Dorsolateral prefrontal cortex (tissue), 120 donors: ENCODE measurements at regions of chr14 and their contacts with region 1.

Region 1: GRCh38 chr14:33357225-33358010 is 418.7 kb downstream of the NPAS3 start:
- DNase-seq: peak in 8 of 10 donors; percentile 33 to 69 (median 52)
- H3K4me3 ChIP-seq: no peak overlapping the region
- H3K27ac ChIP-seq: peak overlapping the region in 12 of 59 donors; percentile 2 to 65 (median 22)
- H3K27me3 ChIP-seq: no peaks in the 10 kb centered on the region
- CTCF ChIP-seq: peak in 9 of 56 donors; percentile 9 to 40 (median 19)

Region 2: GRCh38 chr14:33229269-33229929 is 128.0 kb before region 1 on chr14:
- intact Hi-C with region 1: loop called in 1 of 2 experiments (anchors 10 kb)
- DNase-seq: peak in 9 of 10 donors; percentile 3 to 70 (median 44)
- H3K4me3 ChIP-seq: peak overlapping the region in 47 of 59 donors; percentile 1 to 55 (median 26)
- H3K27ac ChIP-seq: peak overlapping the region in 41 of 59 donors; percentile 1 to 78 (median 40)
- H3K27me3 ChIP-seq: no peaks in the 10 kb centered on the region
- CTCF ChIP-seq: peak in 6 of 56 donors; percentile 12 to 38 (median 19)